HepG2 (cell line): ENCODE measurements at regions of chr5 and their contacts with region 1.

Region 1: GRCh38 chr5:136249678-136250266 is 56.8 kb upstream of the SMIM32 start:
- DNase-seq: peak; percentile 47
- ATAC-seq: peak; percentile 95
- H3K4me3 ChIP-seq: no peak overlapping the region
- H3K27ac ChIP-seq: no peak overlapping the region
- H3K4me1 ChIP-seq: no peaks in the 10 kb centered on the region
- H3K27me3 ChIP-seq: peaks cover 0 to 12% of the 10 kb centered on the region in 2 experiments; a peak in 1 of 5 replicates
- CTCF ChIP-seq: peak; percentile 90
- EP300 ChIP-seq: no peak
- POLR2A ChIP-seq: no peak
- RAD21 ChIP-seq: peak; percentile 72

Region 2: DNA sequence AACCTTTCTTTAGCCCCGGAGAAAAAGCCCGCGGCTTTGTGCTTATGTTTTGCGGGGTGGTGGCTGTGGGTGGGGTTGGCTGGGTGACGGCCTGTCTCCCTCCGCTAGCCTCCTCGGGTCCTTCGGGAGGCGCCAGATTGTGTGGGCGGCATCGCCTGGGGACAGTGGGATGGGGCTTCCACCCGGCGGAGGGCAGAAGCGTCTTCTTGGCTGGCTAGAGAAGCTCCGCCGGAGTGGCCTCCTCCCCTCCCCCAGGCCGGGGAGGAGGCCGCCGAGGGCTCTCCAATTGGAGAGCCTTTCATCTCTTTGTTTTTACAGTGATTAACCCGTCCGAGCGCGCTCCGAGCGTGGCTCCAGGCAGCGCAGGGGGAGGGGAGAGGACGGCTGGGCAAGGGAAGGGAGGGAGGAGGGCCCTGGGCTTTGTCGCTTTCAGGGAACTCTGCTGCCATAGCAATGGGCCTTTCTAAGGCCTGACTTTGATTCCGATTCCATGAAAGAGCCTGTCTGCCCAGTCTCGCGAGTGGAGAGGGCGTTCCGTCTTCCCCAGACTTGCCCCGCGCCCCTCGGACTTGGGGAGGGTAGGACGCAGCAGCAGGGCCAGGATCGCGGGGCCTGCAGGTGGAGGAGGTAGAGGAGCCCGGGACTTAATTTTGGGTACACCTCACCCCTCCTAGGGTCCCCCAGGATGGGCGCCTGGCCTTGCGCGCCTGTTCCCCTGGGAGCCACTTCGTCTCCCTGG is 760.9 kb before region 1 on chr5:
- CTCF ChIA-PET with region 1: no interaction called
- POLR2A ChIA-PET with region 1: no interaction called
- in situ Hi-C with region 1: no loop called
- intact Hi-C with region 1: no loop called
- DNase-seq: peak; percentile 81
- ATAC-seq: peak; percentile 76
- H3K4me3 ChIP-seq: peak overlapping the region; percentile 31 to 69 (median 49)
- H3K27ac ChIP-seq: peak overlapping the region; percentile 87
- H3K4me1 ChIP-seq: peaks cover 88% of the 10 kb centered on the region
- H3K27me3 ChIP-seq: peaks cover 0 to 24% of the 10 kb centered on the region in 2 experiments; a peak in 3 of 5 replicates
- CTCF ChIP-seq: no peak
- EP300 ChIP-seq: peak in 1 of 2 experiments; percentile 76; a peak in 1 of 4 replicates
- POLR2A ChIP-seq: no peak; a peak in 1 of 4 replicates
- RAD21 ChIP-seq: no peak

Region 3: GRCh38 chr5:136374003-136374402 is 124.2 kb after region 1 on chr5:
- CTCF ChIA-PET with region 1: no interaction called
- POLR2A ChIA-PET with region 1: no interaction called
- in situ Hi-C with region 1: no loop called
- intact Hi-C with region 1: loop called (anchors 5 kb)
- DNase-seq: peak; percentile 13
- ATAC-seq: peak; percentile 60
- H3K4me3 ChIP-seq: no peak overlapping the region
- H3K27ac ChIP-seq: no peak overlapping the region
- H3K4me1 ChIP-seq: no peaks in the 10 kb centered on the region
- H3K27me3 ChIP-seq: no peaks in the 10 kb centered on the region
- CTCF ChIP-seq: peak; percentile 31
- EP300 ChIP-seq: no peak
- POLR2A ChIP-seq: no peak
- RAD21 ChIP-seq: no peak